Body of pancreas (tissue), 4 donors: ENCODE measurements at regions of chr6 and their contacts with region 1.

Region 1: DNA sequence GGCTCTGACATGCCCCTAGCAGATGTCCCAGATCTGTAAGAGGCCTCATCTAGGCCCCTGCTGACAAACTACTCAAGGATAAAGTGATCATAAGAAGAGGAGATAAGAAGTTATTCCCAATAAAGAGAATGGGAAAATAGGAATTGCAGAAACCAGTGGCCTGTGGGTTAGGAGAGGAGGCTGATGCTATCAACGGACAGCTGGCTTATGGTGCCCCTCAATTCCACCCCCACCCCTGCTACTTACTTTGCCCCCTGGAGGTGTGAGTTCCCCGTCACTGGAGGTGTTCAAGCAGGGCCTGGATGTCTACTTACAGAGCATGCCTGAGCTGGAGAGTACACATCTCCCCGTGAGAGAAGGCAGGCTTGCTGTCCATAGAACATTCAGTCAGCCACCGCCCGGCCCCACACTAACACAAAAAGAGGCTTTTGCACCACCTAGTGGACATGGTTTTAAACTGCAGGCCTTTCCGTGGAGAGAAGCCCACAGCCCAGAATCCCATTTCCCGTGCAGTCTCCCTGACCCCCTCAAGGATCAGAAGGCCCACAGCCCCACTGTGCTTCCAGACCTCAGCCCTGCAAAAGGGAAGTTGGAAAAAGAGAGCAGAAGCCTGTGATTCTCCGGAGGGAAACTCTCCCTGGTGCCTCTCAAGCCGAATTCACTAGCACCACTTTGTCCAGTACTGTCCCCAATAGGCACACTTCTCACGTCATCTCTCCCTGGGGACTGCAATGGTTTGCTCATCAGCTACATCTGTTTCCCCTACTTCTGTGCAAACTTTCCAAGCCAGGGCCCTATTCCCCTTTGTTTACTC is 23.8 kb upstream of the BNIP5 start:
- DNase-seq: peak; percentile 81 to 89 (median 85)
- ATAC-seq: peak; percentile 82
- H3K4me3 ChIP-seq: no peak overlapping the region
- H3K27ac ChIP-seq: no peak overlapping the region
- H3K4me1 ChIP-seq: peaks cover 36% of the 10 kb centered on the region
- H3K27me3 ChIP-seq: no peaks in the 10 kb centered on the region
- CTCF ChIP-seq: peak; percentile 71 to 90 (median 84)
- POLR2A ChIP-seq: no peak

Region 2: DNA sequence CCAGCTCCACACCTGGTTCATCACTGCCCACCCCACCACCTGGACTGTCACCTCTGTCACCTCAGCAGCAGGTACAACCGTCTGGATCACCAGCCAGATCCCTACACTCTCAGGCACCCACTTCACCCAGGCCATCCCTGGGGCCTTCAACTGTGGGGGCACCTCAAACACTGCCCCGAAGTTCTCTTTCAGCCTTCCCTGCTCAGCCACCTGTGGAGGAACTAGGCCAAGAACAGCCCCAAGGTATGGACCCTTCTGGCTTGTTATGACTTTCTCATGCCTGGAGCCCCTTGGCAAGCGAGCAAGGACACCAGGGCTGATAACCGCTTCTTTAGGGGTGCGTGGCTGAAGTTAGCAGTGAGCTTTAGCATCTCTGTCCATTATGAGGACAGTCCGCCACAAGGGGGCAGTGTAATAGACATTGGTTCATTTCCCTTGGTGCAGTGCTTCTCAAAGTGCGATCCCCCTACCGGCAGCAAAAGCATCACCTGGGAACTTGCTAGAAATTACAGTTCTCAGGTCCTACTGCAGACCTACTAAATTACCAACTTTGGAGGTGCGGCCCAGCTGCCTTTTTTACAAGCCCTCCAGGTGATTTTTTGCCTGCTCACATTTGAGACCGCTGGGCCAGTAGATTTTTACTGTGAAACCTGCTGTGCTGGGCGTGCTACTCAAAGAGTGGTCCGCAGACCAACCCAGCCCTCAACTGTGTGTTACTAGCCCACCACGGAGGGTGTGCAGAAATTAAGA is 58.0 kb before region 1 on chr6:
- intact Hi-C with region 1: loop called (anchors 5 kb)
- DNase-seq: peak; percentile 92 to 96 (median 94)
- ATAC-seq: peak; percentile 97
- H3K4me3 ChIP-seq: no peak overlapping the region
- H3K27ac ChIP-seq: no peak overlapping the region
- H3K4me1 ChIP-seq: no peaks in the 10 kb centered on the region
- H3K27me3 ChIP-seq: peaks cover 0 to 6% of the 10 kb centered on the region in 2 donors
- CTCF ChIP-seq: peak; percentile 77 to 98 (median 96)
- POLR2A ChIP-seq: no peak